ENCODE measurements at regions of chr3 and their contacts with region 1.

Region 1: DNA sequence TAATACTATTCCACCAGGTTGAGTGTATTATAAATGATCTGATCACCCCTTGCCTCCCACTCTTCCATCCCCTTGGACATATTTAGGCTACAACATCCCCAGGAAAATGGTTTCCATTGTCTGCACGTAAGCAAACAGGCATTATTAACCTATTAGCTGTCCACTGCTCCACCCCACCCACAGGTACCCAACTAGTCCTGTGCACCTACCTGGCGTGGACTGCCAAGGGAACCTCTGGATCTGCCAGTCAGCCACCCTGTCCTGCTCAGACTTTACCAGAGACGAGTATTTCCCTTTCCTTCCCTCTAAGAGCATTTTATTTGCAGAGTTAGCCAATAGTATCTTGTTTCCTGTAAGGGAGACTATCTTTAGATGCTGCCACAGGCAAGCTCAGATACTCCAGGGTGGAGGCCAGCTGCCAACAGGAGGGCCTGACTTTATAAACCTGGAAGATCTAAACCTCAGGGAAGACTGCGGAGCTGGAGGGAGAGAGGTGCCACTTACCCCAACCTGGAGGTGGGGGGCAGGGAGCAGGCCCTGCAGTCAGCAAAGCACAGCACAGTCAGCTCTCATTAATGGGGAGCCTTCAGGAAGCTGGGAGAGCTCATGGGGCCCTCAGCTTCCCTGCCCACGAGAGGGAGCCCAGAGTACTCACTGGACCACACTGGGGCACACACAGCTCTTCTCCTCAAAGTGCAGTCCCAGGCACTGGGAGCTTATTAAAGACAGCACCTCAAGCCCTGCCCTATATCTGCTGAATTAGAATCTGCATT is at the start of gene CX3CR1:
- DNase-seq: no peak
- ATAC-seq: no peak
- H3K4me3 ChIP-seq: no peak within 1 kb of the TSS
- H3K27ac ChIP-seq: no peak within 1 kb of the TSS
- H3K4me1 ChIP-seq: no peaks in the 10 kb centered on the region
- H3K27me3 ChIP-seq: no peaks in the 10 kb centered on the region
- CTCF ChIP-seq: no peak
- POLR2A ChIP-seq: no peak
- total RNA-seq, gene CX3CR1: 1.3 TPM in 1 of 2 donors, not detected in the other

Region 2: DNA sequence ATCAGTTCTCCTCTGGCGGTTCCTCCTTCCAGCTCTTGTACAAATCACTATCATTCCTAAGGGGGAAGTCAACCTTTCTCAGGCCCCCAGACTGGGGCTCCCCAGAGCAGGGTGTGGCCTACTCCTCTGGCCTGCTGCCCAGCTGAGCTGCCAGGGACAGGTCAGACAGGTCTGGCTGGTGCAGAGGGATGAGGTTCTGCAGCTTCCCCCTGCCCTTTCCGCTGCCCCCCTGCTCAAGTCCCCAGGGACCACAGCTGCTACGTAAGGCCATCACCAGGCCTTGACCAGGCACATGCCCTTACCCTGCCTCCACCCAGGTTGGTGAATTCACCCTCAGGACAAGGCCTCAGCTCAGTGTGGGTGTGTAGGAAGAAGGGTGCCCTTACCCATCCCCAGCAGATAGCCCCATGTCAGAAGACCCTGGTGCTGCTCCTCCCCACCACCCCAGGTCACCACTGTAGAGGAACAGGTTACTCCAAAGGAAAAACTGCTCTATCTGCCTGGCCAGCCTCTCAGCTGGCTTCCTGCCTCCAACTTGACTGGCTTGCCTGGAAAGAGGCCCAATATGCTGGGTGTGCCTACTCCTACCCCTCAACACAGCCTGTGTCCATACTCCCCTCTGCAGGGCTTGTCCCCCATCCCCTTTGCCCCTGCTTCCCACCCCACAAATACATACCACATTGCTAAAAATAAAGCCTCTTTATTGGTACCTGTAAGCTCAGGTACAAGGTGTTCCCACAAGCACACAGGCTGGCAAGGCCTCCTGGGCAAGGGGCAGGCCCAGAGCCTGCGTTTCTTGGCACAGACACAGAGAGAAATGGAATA is 138.5 kb before region 1 on chr3:
- intact Hi-C with region 1: no loop called
- DNase-seq: peak; percentile 88 to 96 (median 92)
- ATAC-seq: peak; percentile 84
- H3K4me3 ChIP-seq: no peak overlapping the region
- H3K27ac ChIP-seq: peak overlapping the region; percentile 93 to 97 (median 95)
- H3K4me1 ChIP-seq: peaks cover 60% of the 10 kb centered on the region
- H3K27me3 ChIP-seq: no peaks in the 10 kb centered on the region
- CTCF ChIP-seq: peak in 1 of 7 experiments; percentile 9
- POLR2A ChIP-seq: peak in 1 of 3 donors; percentile 11

Region 3: DNA sequence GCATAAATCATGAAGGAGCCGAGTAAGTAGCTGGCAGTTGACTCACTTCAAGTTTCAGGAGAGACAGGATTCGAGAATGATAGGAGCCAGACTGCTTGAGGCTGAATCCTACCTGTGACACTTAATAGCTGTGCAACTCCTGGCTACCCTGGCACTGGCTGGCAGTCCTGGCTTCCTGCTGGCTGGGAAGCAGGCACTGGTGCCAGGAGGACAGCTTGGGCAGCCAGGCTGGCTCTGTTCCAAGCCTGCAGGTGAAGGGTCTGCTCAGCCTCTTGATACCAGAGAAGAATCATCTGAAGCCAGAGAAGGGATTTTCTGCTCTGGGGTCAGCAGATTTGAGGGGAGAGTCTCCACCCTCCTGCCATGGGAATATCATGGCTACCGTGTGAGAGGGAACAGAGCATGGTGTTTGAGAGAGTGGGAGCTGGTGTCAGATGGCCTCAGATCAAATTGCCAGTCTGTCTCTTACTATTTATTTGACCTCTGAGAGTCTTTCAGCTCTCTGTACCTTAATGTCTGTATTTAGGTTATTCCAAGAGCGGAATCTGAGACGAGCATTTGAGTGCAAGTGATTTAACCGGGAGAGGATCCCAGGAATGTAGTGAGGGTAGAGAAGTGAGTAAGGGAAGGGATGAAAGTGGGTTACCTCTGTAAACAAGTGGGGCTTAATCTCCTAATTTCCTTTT is 83.1 kb before region 1 on chr3:
- intact Hi-C with region 1: loop called (anchors 5 kb)
- DNase-seq: peak in 2 of 4 donors; percentile 46 to 48
- ATAC-seq: no peak
- H3K4me3 ChIP-seq: no peak overlapping the region
- H3K27ac ChIP-seq: no peak overlapping the region
- H3K4me1 ChIP-seq: no peaks in the 10 kb centered on the region
- H3K27me3 ChIP-seq: no peaks in the 10 kb centered on the region
- CTCF ChIP-seq: no peak
- POLR2A ChIP-seq: no peak

Measured in body of pancreas (tissue), 4 donors.